Activated naive CD4-positive, alpha-beta T cell treated with anti-CD3 and anti-CD28 coated beads for 36 hours (primary cell): ENCODE measurements at regions of chrX and their contacts with region 1.

Region 1: GRCh38 chrX:49163555-49164419 is 1.2 kb downstream of the MAGIX start:
- DNase-seq: peak; percentile 77
- H3K4me3 Mint-ChIP-seq: peak overlapping the region; percentile 76
- H3K27ac Mint-ChIP-seq: peak overlapping the region; percentile 93
- H3K4me1 Mint-ChIP-seq: peaks cover 27% of the 10 kb centered on the region
- H3K27me3 Mint-ChIP-seq: no peaks in the 10 kb centered on the region

Region 2: DNA sequence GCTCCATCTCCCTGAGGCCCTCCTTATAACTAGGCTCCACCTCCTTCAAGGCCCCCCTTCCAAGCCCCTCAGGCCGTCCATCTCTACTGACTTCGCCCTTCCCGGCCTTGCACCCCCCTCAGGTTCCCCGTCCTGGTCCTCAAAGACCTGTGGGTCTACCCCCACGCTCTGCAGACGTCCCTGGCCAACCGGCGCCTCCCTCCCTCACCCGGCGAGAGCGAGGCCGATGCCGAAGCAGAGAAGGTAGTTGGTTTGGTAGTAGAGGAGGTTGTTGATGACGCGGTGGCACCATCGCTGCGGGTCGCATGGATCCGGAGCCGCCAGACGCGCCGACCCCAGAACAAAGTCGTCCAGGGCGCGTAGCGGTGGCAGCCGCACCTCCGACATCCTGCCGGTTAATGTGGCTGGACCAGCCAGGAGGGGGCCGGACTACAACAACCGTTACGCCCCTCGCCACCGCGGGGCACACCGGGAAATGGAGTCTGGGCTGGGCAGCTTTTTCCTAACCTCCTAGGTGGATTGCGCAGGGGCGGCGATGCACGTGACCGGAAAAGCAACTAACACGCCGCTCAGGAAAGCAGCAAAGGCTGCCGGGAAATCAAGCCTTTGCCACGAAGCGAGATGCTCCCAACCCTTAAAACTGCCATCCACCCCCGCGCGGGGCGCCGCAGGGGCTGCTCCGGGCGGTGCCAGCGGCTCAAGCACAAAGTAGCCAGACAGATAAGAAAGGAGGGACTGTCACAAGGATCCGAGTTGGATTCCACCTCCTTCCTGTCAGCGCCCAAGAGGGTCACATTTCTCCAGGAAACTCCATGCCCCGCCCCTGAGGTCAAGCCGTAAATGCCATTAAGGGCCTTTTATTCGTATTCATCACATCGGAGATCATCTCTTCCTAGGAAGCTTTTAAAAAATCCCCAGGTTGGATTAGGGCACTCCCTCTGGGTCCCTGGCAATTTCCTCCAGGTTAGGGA is 89.9 kb before region 1 on chrX and contains the start of gene PRAF2:
- CTCF ChIA-PET with region 1: no interaction called
- intact Hi-C with region 1: loop called (anchors 10 kb)
- DNase-seq: peak; percentile 94
- H3K4me3 Mint-ChIP-seq: peak within 1 kb of the TSS; percentile 80
- H3K27ac Mint-ChIP-seq: peak within 1 kb of the TSS; percentile 76
- H3K4me1 Mint-ChIP-seq: peaks cover 22% of the 10 kb centered on the region
- H3K27me3 Mint-ChIP-seq: no peaks in the 10 kb centered on the region
- total RNA-seq, gene PRAF2: 14.5 to 14.8 TPM

Region 3: GRCh38 chrX:49137492-49137891 is 26.3 kb before region 1 on chrX:
- CTCF ChIA-PET with region 1: interaction called, 3 read pairs
- intact Hi-C with region 1: loop called (anchors 2 kb)
- DNase-seq: no peak
- H3K4me3 Mint-ChIP-seq: no peak overlapping the region
- H3K27ac Mint-ChIP-seq: no peak overlapping the region
- H3K4me1 Mint-ChIP-seq: no peaks in the 10 kb centered on the region
- H3K27me3 Mint-ChIP-seq: no peaks in the 10 kb centered on the region

Region 4: GRCh38 chrX:49184294-49185061 is 20.7 kb after region 1 on chrX:
- CTCF ChIA-PET with region 1: no interaction called
- intact Hi-C with region 1: loop called (anchors 2 kb)
- DNase-seq: peak; percentile 70
- H3K4me3 Mint-ChIP-seq: peak overlapping the region; percentile 83
- H3K27ac Mint-ChIP-seq: peak overlapping the region; percentile 84
- H3K4me1 Mint-ChIP-seq: peaks cover 12% of the 10 kb centered on the region
- H3K27me3 Mint-ChIP-seq: no peaks in the 10 kb centered on the region